PC-3 (cell line): ENCODE measurements at regions of chr1 and their contacts with region 1.

Region 1: GRCh38 chr1:157992031-157992832 is 1.2 kb upstream of the KIRREL1 start:
- DNase-seq: peak; percentile 84
- ATAC-seq: peak; percentile 47
- H3K4me3 ChIP-seq: peak overlapping the region; percentile 96; the same call in 1 of the 2 replicates
- H3K27ac ChIP-seq: no peak overlapping the region
- H3K4me1 ChIP-seq: peaks cover 27% of the 10 kb centered on the region
- H3K27me3 ChIP-seq: peaks cover 15% of the 10 kb centered on the region; the same call in 1 of the 2 replicates
- CTCF ChIP-seq: peak; percentile 99

Region 2: GRCh38 chr1:157969697-157970485 is 22.3 kb before region 1 on chr1:
- CTCF ChIA-PET with region 1: interaction called, 4 read pairs
- POLR2A ChIA-PET with region 1: no interaction called
- intact Hi-C with region 1: loop called (anchors 1 kb)
- DNase-seq: peak; percentile 95
- ATAC-seq: peak; percentile 80
- H3K4me3 ChIP-seq: peak overlapping the region; percentile 20; the same call in 1 of the 2 replicates
- H3K27ac ChIP-seq: peak overlapping the region; percentile 86
- H3K4me1 ChIP-seq: peaks cover 18% of the 10 kb centered on the region
- H3K27me3 ChIP-seq: 0 out of 2 replicates have a peak, but pooled peaks cover under 1% of the 10 kb centered on the region
- CTCF ChIP-seq: peak; percentile 97

Region 3: GRCh38 chr1:158019171-158019868 is 27.1 kb after region 1 on chr1:
- CTCF ChIA-PET with region 1: interaction called, 12 read pairs
- POLR2A ChIA-PET with region 1: interaction called, 11 read pairs
- intact Hi-C with region 1: loop called (anchors 2 kb)
- DNase-seq: peak; percentile 96
- ATAC-seq: peak; percentile 93
- H3K4me3 ChIP-seq: peak overlapping the region; percentile 42
- H3K27ac ChIP-seq: peak overlapping the region; percentile 72
- H3K4me1 ChIP-seq: peaks cover 66% of the 10 kb centered on the region
- H3K27me3 ChIP-seq: no peaks in the 10 kb centered on the region
- CTCF ChIP-seq: no peak

Region 4: DNA sequence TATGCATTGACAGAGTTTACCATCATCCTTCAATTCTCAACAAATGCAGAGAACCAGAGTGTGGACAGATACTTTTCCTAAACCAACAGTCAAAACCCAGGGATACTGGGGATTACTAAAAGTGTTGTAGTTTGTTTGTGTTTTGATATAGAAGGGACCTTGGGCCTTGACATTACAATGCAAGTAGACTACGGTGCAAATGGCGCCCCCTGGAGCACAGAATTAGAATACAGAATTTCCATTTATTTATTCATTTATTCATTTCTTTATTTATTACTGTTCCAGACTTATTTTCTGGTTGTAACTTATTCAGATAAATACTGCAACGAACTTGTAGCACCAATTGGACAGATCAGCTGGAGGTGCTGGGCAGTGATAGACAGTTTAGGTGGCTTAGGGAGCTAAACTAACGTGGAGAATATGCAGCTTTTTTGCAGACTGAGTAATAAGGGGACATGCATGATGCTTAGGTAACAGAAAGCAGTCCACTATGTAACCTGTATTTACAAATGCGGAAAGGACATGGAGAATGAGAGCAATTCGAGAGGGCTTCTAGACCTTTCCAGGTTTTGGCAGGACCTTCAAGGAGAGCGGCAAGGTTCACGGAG is 43.8 kb after region 1 on chr1:
- CTCF ChIA-PET with region 1: interaction called, 12 read pairs
- POLR2A ChIA-PET with region 1: no interaction called
- intact Hi-C with region 1: loop called (anchors 1 kb)
- DNase-seq: peak; percentile 79
- ATAC-seq: peak; percentile 24; the same call in 1 of the 2 replicates
- H3K4me3 ChIP-seq: no peak overlapping the region
- H3K27ac ChIP-seq: no peak overlapping the region
- H3K4me1 ChIP-seq: peaks cover 22% of the 10 kb centered on the region
- H3K27me3 ChIP-seq: no peaks in the 10 kb centered on the region
- CTCF ChIP-seq: peak; percentile 96

Region 5: GRCh38 chr1:158124999-158125398 is 132.8 kb after region 1 on chr1:
- CTCF ChIA-PET with region 1: interaction called, 45 read pairs
- POLR2A ChIA-PET with region 1: no interaction called
- intact Hi-C with region 1: loop called (anchors 1 kb)
- DNase-seq: peak; percentile 98
- ATAC-seq: peak; percentile 92
- H3K4me3 ChIP-seq: no peak overlapping the region
- H3K27ac ChIP-seq: no peak overlapping the region
- H3K4me1 ChIP-seq: no peaks in the 10 kb centered on the region
- H3K27me3 ChIP-seq: peaks cover 40% of the 10 kb centered on the region
- CTCF ChIP-seq: peak; percentile 97